A673 (cell line): ENCODE measurements at regions of chr6 and their contacts with region 1.

Region 1: GRCh38 chr6:110682460-110682853 is 132.8 kb downstream of the CDK19 start:
- DNase-seq: peak; percentile 87
- H3K4me3 ChIP-seq: no peak overlapping the region
- H3K27ac ChIP-seq: no peak overlapping the region
- H3K4me1 ChIP-seq: no peaks in the 10 kb centered on the region
- H3K27me3 ChIP-seq: no peaks in the 10 kb centered on the region
- CTCF ChIP-seq: peak; percentile 77

Region 2: GRCh38 chr6:110671116-110671846 is 11.2 kb before region 1 on chr6:
- CTCF ChIA-PET with region 1: interaction called, 14 read pairs
- POLR2A ChIA-PET with region 1: no interaction called
- intact Hi-C with region 1: no loop called
- DNase-seq: no peak
- H3K4me3 ChIP-seq: no peak overlapping the region
- H3K27ac ChIP-seq: no peak overlapping the region
- H3K4me1 ChIP-seq: peaks cover 4% of the 10 kb centered on the region
- H3K27me3 ChIP-seq: no peaks in the 10 kb centered on the region
- CTCF ChIP-seq: no peak

Region 3: DNA sequence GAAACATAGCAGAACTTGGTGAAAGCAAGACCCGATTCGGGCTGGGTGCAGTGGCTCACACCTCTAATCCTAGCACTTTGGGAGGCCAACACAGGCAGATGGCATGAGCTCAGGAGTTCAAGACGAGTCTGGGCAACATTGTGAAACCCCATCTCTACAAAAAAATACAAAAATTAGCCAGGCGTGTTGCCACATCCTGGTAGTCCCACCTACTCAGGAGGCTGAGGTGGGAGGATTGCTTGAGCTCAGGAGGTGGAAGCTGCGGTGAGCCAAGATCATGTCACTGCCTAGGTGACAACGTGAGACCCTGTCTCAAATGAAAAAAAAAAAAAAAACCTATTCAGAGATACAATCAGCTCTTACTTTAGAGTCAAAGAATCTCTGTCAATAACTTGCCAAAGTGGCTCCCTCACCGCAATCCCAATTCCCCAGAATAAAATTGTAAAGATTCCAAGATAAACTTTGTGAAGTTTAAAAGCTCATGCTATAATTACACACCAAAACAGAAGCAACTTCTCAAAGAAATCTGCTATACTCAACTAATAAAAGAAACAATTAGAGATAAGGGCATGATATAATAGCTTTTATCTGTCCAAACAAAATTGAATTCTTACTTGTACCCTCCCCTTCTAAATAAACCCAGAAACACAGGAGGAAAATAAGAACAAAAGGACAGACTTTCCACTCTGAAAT is 99.2 kb after region 1 on chr6:
- CTCF ChIA-PET with region 1: no interaction called
- POLR2A ChIA-PET with region 1: no interaction called
- intact Hi-C with region 1: no loop called
- DNase-seq: no peak
- H3K4me3 ChIP-seq: no peak overlapping the region
- H3K27ac ChIP-seq: no peak overlapping the region
- H3K4me1 ChIP-seq: no peaks in the 10 kb centered on the region
- H3K27me3 ChIP-seq: no peaks in the 10 kb centered on the region
- CTCF ChIP-seq: no peak

Region 4: GRCh38 chr6:110949679-110950285 is 267.3 kb after region 1 on chr6:
- CTCF ChIA-PET with region 1: interaction called, 6 read pairs
- POLR2A ChIA-PET with region 1: no interaction called
- intact Hi-C with region 1: loop called (anchors 2 kb)
- DNase-seq: peak; percentile 43
- H3K4me3 ChIP-seq: no peak overlapping the region
- H3K27ac ChIP-seq: no peak overlapping the region
- H3K4me1 ChIP-seq: peaks cover 4% of the 10 kb centered on the region
- H3K27me3 ChIP-seq: no peaks in the 10 kb centered on the region
- CTCF ChIP-seq: peak; percentile 66

Region 5: DNA sequence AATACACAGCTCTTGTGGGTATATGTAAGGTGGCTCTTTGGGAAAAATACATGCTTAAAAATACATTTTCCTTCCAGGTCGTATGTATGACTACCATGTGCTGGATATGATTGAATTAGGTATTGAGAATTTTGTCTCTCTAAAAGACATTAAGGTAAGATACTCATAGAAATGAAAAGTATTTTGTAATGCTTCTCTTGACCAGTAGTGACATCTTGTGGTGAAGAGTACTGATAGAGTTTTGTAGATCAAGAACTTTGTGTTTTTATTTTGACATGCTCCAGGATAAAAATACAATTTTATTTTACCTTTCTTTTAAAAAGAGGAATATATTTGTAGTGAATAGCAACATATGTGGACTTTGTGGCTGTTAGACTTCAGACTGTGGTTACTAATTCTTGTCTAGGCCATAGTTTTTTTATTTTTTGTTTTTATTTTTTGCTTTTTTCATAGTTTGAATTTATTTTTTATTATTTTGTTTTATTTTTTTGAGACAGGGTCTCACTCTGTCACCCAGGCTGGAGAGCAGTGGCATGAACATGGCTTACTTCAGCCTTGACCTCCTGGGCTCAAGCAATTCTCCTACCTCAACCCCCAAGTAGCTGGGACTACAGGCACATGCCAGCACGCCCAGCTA is 317.3 kb after region 1 on chr6:
- CTCF ChIA-PET with region 1: no interaction called
- POLR2A ChIA-PET with region 1: no interaction called
- intact Hi-C with region 1: loop called (anchors 1 kb)
- DNase-seq: peak; percentile 19
- H3K4me3 ChIP-seq: no peak overlapping the region
- H3K27ac ChIP-seq: no peak overlapping the region
- H3K4me1 ChIP-seq: no peaks in the 10 kb centered on the region
- H3K27me3 ChIP-seq: no peaks in the 10 kb centered on the region
- CTCF ChIP-seq: peak; percentile 45